Ascending aorta (tissue), 2 donors: ENCODE measurements at regions of chr3 and their contacts with region 1.

Region 1: GRCh38 chr3:72405943-72406566 is 442.2 kb downstream of the SHQ1 start:
- DNase-seq: no peak
- H3K4me3 ChIP-seq: no peak overlapping the region
- H3K27ac ChIP-seq: no peak overlapping the region
- H3K4me1 ChIP-seq: peaks cover 2 to 11% of the 10 kb centered on the region in 2 donors
- H3K27me3 ChIP-seq: no peaks in the 10 kb centered on the region
- CTCF ChIP-seq: no peak

Region 2: DNA sequence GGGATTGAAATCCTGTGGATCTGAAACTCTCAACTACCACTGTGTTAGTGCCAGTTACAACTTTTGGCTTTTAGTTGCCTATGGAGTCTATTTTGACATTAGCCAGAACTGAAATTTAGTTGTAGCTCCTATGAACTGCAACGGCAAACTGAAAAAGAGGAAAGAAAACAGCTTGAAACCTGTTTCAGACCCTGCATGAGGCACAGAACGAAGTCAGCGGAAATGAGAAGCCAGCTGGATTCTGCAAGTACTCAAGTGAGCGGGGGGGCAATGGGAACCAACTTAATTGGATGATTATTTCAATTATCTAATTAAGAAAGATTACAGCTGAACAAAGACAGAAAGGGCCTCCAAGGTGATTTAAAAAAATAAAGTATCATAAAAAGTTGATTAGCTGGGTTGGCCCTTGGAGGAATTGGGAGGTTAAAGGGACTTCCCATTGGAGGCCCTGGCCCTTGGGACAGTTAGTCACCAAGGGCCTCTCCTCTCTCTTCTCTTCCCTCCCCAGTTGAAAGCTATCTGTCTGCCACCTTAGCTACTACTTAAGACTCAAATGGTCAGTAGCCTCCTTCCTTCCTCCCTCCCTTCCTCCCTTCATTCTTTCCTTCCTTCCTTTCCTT is 90.1 kb after region 1 on chr3:
- intact Hi-C with region 1: no loop called
- DNase-seq: no peak
- H3K4me3 ChIP-seq: no peak overlapping the region
- H3K27ac ChIP-seq: no peak overlapping the region
- H3K4me1 ChIP-seq: no peaks in the 10 kb centered on the region
- H3K27me3 ChIP-seq: no peaks in the 10 kb centered on the region
- CTCF ChIP-seq: no peak

Region 3: DNA sequence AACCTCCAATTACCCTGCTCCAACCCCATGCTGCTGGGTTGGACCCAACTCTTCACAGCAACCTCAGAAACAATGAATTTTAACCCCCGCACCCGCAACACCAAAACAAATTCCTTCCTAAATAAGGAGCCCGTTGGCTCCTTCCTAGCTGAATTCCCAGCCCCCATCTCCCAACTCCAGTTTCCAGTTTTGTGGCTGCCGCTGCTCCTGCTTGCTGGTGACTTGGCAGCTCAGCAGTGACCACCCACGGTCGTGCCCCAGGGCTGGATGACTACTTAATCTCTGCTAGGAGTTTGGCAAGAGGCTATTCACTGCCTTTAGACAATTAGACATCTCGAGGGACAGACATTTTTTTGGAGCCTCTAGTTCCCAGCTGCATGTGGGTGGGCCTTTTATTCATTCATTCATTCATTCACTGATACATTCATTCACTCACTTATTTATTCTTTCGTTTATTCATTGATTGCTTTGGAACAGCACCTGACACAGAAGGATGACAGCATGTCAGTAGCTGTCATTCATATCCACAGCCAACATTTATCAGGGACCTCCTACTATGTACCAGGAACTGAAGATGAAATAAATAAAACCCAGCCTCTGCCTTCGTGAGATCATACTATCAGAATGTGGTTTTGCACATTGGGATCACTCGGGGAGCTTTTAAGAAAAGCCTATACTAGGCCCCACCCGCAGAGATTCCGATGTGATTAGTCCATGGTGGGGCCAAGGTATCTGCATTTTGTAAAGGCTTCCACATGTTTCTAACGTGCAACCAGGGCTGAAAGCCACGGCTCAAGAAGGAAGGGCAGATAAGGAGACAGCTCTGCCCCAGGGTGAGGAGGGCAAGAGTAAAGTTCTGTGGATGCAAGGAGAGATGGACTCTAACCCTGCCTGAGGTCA is 185.7 kb after region 1 on chr3:
- intact Hi-C with region 1: loop called (anchors 10 kb)
- DNase-seq: peak in 1 of 2 donors; percentile 76
- H3K4me3 ChIP-seq: peak overlapping the region in 1 of 2 donors; percentile 15
- H3K27ac ChIP-seq: peak overlapping the region in 1 of 2 donors; percentile 35
- H3K4me1 ChIP-seq: peaks cover 0 to 6% of the 10 kb centered on the region in 2 donors
- H3K27me3 ChIP-seq: no peaks in the 10 kb centered on the region
- CTCF ChIP-seq: no peak